PC-9 (cell line): ENCODE measurements at regions of chr19 and their contacts with region 1.

Region 1: GRCh38 chr19:45569619-45570421 is 14.8 kb downstream of the OPA3 start:
- DNase-seq: peak; percentile 38 to 67
- H3K4me3 ChIP-seq: no peak overlapping the region
- H3K27ac ChIP-seq: peak overlapping the region; percentile 75
- H3K4me1 ChIP-seq: peaks cover 41% of the 10 kb centered on the region
- H3K27me3 ChIP-seq: no peaks in the 10 kb centered on the region
- CTCF ChIP-seq: peak; percentile 93

Region 2: GRCh38 chr19:45523642-45524256 is 46.1 kb before region 1 on chr19:
- CTCF ChIA-PET with region 1: no interaction called
- POLR2A ChIA-PET with region 1: no interaction called
- intact Hi-C with region 1: loop called (anchors 1 kb)
- DNase-seq: peak; percentile 75 to 81
- H3K4me3 ChIP-seq: no peak overlapping the region
- H3K27ac ChIP-seq: peak overlapping the region; percentile 17; the same call in 1 of the 2 replicates
- H3K4me1 ChIP-seq: peaks cover 36% of the 10 kb centered on the region
- H3K27me3 ChIP-seq: no peaks in the 10 kb centered on the region
- CTCF ChIP-seq: peak; percentile 98

Region 3: DNA sequence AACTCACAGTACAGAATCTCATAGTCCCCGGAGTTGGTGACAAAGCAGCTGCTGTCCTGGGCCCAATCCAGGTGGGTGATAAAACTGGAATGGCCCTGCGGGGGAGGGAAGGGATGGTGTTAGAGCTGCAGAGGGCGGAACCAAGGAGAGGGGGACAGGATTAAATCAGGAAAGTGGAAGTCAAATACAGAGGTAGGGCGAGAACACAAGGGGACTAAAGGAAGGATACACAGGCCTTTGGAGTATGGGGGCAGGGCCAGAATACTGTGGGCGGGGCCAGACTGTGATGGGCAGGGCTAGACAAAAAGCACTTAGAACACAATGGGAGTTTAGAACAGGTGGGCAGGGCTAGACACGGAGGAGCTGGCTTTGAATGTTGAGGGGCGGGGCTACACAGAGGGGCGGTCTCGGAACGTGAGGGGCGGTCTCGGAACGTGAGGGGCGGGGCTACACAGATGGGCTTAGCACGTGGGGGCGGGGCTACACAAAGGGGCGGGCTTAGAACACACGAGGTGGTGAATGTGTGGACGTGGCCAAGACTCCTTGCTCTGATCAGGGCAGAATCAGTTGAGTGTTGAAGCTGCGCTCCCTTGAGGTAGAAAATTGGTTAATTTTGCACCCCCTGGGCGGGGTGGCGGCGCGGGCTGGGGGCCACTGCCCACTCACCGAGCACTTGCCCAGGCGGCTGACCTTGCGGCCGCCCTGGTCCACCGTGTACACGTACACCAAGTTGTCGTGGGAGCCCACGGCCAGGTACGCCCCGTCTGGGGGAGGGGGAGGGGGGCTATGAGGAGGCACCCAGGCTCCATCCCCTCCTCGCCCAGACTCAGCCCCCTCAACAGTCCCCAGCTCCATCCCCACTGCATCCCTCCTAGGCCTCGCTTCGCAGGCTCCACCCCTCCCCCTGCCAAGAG is 46.2 kb after region 1 on chr19:
- CTCF ChIA-PET with region 1: interaction called, 14 read pairs
- POLR2A ChIA-PET with region 1: no interaction called
- intact Hi-C with region 1: no loop called
- DNase-seq: peak; percentile 80 to 87
- H3K4me3 ChIP-seq: no peak overlapping the region
- H3K27ac ChIP-seq: peak overlapping the region; percentile 53
- H3K4me1 ChIP-seq: peaks cover 22% of the 10 kb centered on the region
- H3K27me3 ChIP-seq: no peaks in the 10 kb centered on the region
- CTCF ChIP-seq: no peak